Astrocyte of the cerebellum (primary cell): ENCODE measurements at regions of chr13 and their contacts with region 1.

Region 1: GRCh38 chr13:43905435-43906031 is 25.8 kb downstream of the LACC1 start:
- DNase-seq: peak; percentile 70
- H3K4me3 ChIP-seq: no peak overlapping the region
- CTCF ChIP-seq: peak; percentile 60

Region 2: DNA sequence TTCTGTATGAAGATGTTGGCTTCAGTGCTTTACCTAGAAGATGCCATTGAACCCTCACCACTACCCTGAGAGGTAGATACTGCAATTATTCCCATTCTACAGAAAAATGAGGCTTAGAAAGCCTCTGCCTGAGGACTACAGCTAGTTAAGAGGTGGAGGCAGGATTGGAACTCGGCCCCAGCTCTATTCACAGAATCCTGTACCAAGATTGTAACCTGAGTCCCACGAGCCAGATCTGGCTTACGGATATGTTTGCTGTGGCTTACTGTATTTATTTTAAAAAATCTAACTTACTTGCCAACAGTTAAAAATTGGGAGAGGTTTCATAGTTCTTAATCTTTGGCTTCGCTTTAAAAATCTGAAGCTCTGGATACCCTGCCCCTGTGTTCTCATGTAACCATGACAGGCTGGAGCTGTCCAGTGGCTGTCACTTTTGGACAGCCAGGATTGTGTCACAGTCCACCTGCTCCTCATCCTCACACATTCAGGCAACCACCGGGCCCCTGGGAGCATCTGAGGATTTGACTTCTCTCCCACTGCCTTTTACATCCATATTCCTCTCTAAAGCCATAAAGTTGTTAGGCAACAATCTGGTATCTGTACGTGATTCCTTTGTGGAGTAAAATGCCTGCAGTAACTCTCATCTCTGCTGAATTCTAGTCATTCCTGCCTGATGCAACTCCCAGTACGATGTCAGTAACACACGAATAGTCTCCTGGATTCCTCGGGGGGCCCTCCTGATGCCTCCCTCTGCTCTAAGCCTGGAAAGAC is 307.3 kb after region 1 on chr13:
- in situ Hi-C with region 1: no loop called
- DNase-seq: no peak
- H3K4me3 ChIP-seq: no peak overlapping the region
- CTCF ChIP-seq: no peak

Region 3: GRCh38 chr13:44350775-44351509 is 445.4 kb after region 1 on chr13:
- in situ Hi-C with region 1: no loop called
- DNase-seq: no peak
- H3K4me3 ChIP-seq: no peak overlapping the region
- CTCF ChIP-seq: no peak

Region 4: GRCh38 chr13:44449999-44450708 is 544.6 kb after region 1 on chr13:
- in situ Hi-C with region 1: loop called (anchors 5 kb)
- DNase-seq: no peak
- H3K4me3 ChIP-seq: no peak overlapping the region
- CTCF ChIP-seq: no peak

Region 5: GRCh38 chr13:44969551-44970484 is 1064.3 kb after region 1 on chr13:
- in situ Hi-C with region 1: loop called (anchors 25 kb)
- DNase-seq: peak; percentile 68
- H3K4me3 ChIP-seq: no peak overlapping the region
- CTCF ChIP-seq: peak; percentile 70